Heart right ventricle (tissue), 16 donors: ENCODE measurements at regions of chr2 and their contacts with region 1.

Region 1: DNA sequence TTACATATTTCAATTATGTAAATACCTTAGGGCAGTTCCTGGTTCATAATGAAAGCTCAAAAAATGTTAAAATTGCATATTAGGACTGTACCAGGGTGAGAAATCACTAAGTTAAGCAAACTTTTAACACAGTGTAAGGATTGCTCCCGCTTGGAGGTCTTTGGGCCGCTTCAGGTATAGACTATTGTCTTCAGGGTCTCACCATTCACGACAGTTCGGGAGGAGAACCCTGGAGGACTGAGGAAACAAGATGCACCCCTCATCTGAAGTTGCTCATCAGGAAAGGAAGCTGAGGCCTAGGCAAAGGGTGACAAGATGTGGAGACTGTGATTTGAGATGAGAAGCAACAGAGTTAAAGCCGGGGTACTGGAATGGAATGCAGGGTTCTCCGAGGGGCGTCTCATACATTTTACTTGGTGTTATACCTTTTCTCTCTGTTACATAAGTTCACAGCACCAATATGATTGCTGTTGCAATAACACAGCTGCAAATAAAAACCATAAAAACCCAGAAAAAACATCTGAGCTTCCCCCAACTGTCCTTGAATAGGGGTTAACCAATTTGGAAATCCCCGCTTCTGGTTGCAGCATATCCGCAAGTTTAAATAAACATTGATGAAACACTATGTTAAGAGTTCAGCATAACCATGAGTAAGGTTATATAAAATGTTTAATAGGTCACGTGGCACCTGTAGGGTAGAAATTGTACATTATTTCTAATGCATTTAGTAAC is 40.1 kb downstream of the FBXO48 start:
- DNase-seq: no peak
- ATAC-seq: no peak
- H3K4me3 ChIP-seq: no peak overlapping the region
- H3K27ac ChIP-seq: peak overlapping the region in 1 of 10 donors; percentile 59
- H3K4me1 ChIP-seq: peaks cover 0 to 59% (median 10%) of the 10 kb centered on the region in 9 donors
- H3K27me3 ChIP-seq: no peaks in the 10 kb centered on the region
- CTCF ChIP-seq: no peak

Region 2: GRCh38 chr2:68387408-68388350 is 39.3 kb before region 1 on chr2:
- intact Hi-C with region 1: loop called in 1 of 10 experiments (anchors 5 kb)
- DNase-seq: no peak
- ATAC-seq: peak in 2 of 8 donors; percentile 12
- H3K4me3 ChIP-seq: no peak overlapping the region
- H3K27ac ChIP-seq: peak overlapping the region in 2 of 10 donors; percentile 53 to 74
- H3K4me1 ChIP-seq: peaks cover 0 to 75% (median 27%) of the 10 kb centered on the region in 9 donors
- H3K27me3 ChIP-seq: no peaks in the 10 kb centered on the region
- CTCF ChIP-seq: no peak